ENCODE measurements at regions of chr1 and their contacts with region 1.

Region 1: DNA sequence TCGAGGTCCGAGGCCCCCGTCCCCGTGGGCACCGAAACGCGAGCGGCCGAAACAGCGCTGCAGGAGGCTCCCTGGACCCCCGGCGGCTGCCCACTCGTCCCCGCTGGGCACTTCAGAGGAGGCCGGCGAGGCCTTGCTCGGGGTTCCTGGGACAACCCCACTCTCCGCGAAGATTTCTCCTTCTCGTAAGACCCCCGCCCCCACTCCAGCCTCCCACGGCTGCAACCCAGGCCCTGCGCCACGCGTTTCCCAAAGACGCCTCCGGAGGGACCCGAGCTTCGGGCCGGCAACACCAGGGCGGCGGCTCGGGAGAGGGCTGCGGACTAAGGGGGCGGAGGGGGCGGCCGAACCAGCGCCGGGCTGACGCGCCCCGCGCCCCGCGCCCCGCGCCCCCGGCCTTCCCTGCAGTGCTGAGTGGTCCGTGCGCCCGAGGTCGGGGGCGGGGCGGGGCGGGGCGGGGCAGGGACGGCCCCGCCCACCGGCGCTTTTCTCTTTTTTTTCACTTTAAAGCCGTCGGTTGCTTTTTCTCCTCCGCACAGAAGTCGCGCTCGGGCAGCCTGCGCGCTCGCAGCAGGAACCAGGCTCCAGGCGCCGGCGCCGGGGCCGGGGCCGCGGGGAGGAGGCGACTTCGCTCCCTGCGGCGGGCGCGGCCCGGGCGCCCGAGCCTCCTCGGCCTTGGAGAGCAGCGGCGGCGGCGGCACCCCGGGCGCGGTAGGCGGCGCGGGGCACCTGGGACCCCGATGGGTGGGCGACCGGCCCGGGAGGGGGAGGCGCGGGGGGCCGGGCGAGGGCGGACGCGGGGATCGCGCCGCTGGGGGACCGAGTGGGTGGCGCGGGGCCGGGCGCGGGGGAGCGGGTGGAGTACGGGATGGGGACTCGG is at the start of gene SPSB1:
- H3K4me3 ChIP-seq: peak within 1 kb of the TSS; percentile 67
- H3K27ac ChIP-seq: peak within 1 kb of the TSS; percentile 48; the same call in 1 of the 2 replicates
- H3K4me1 ChIP-seq: no peaks in the 10 kb centered on the region
- CTCF ChIP-seq: no peak

Region 2: GRCh38 chr1:9270290-9270883 is 22.2 kb before region 1 on chr1:
- CTCF ChIA-PET with region 1: interaction called, 44 read pairs
- POLR2A ChIA-PET with region 1: no interaction called
- H3K4me3 ChIP-seq: no peak overlapping the region
- H3K27ac ChIP-seq: no peak overlapping the region
- H3K4me1 ChIP-seq: peaks cover 4% of the 10 kb centered on the region
- CTCF ChIP-seq: no peak

Region 3: GRCh38 chr1:9449106-9449627 is 156.6 kb after region 1 on chr1:
- CTCF ChIA-PET with region 1: interaction called, 91 read pairs
- POLR2A ChIA-PET with region 1: interaction called, 4 read pairs
- H3K4me3 ChIP-seq: no peak overlapping the region
- H3K27ac ChIP-seq: no peak overlapping the region
- H3K4me1 ChIP-seq: peaks cover 6% of the 10 kb centered on the region; the same call in 1 of the 2 replicates
- CTCF ChIP-seq: no peak

Region 4: GRCh38 chr1:9455487-9456234 is 163.1 kb after region 1 on chr1:
- CTCF ChIA-PET with region 1: interaction called, 91 read pairs
- POLR2A ChIA-PET with region 1: no interaction called
- H3K4me3 ChIP-seq: no peak overlapping the region
- H3K27ac ChIP-seq: no peak overlapping the region
- H3K4me1 ChIP-seq: no peaks in the 10 kb centered on the region
- CTCF ChIP-seq: peak; percentile 44; the same call in 1 of the 2 replicates

Region 5: GRCh38 chr1:9486466-9487140 is 194.0 kb after region 1 on chr1:
- CTCF ChIA-PET with region 1: interaction called, 57 read pairs
- POLR2A ChIA-PET with region 1: no interaction called
- H3K4me3 ChIP-seq: no peak overlapping the region
- H3K27ac ChIP-seq: no peak overlapping the region
- H3K4me1 ChIP-seq: no peaks in the 10 kb centered on the region
- CTCF ChIP-seq: no peak

Region 6: DNA sequence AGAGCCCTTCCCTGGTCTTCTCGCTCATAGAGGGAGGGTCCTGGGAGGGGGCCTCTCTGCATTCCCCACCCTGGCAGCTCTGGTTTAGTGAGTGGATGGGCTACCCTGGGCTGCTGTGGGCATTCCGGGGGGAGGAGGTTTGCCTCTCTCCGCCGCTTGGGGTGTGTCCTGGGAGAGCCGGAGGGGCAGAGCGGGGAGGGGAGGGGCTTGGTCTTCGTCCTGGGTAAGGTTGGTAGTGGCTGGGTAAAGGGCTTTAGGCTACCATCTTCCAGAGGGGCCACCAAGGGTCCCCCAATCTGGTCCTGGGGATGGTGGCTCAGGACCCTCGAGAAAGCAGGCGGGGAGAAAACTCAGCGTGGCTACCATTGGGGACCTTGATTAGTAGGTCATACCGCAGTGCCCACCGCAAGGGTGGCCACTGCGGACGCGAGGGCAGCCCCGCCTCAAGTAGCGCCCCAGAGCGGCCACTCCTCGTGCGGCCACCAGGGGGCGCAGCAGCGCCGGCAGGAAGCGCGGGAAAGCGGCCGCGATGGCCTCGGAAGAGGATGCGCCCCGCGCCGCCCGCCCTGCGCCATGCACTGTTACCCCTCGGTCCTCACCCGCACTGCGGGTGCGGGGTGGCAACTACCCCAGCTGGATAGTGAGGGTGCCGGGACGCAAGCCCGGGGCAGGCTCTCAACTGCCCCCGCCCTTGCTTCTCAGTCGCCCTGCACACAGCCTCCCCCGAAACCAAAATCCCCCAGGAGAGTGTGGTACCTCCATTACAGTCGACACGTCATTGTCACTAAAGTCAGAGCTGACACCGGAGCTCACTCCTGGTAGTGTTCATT is 202.5 kb after region 1 on chr1:
- CTCF ChIA-PET with region 1: interaction called, 57 read pairs
- POLR2A ChIA-PET with region 1: no interaction called
- H3K4me3 ChIP-seq: peak overlapping the region; percentile 32
- H3K27ac ChIP-seq: no peak overlapping the region
- H3K4me1 ChIP-seq: 0 out of 2 replicates have a peak, but pooled peaks cover 2% of the 10 kb centered on the region
- CTCF ChIP-seq: peak; percentile 95

Measured in HEK293 (cell line).